Common myeloid progenitor, CD34-positive (primary cell): ENCODE measurements at regions of chr21 and their contacts with region 1.

Region 1: GRCh38 chr21:39388038-39388810 is 39.3 kb upstream of the HMGN1 start:
- DNase-seq: peak; percentile 82 to 85 (median 82)
- H3K4me3 ChIP-seq: peak overlapping the region in 6 of 7 experiments; percentile 49 to 82 (median 67)
- H3K27ac ChIP-seq: peak overlapping the region in 1 of 2 experiments; percentile 79
- H3K4me1 ChIP-seq: peaks cover 3 to 37% (median 30%) of the 10 kb centered on the region in 4 experiments
- H3K27me3 ChIP-seq: no peaks in the 10 kb centered on the region

Region 2: DNA sequence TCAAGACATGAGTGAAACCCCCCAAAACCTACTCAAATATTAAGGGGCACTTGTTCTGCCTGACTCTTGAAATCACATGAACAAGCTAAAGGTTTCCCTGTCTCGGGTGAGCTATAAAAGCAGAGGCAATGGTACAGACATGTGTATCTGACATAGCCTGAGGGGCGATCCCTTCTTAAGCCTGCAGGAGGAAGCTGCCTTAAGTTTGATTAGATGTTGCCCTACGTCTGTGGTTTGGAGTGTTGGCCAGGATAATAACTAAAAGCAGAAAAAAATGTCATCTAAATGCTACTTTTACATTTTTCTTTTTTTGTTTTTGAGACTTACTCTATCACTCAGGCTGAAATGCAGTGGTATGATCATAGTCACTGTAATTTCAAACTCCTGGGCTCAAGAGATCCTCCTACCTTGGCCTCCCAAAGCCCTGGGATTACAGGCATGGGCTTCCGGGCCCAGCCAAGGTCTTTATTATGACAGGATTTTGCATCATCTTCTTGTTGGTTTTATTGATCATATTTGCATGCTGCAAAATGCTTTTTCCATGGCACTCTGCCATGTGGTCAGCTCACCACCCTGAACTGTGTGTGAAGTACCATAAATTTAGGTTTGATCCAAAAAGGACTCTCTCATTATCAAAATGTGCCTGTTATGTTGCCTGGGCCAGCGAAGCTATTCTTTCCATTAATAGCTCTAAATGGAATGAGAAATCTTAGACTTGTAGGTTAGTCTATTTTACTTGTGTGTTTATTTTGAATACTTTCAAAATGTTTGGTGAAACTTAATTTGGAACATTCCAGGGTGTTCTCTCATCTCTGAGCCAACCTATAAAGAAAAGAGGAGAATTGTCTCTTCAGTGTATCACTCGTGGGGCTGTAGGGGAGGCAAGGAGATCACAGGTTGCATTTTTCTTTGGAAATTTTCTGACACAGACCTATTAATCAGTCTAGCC is 24.3 kb before region 1 on chr21:
- CTCF ChIA-PET with region 1: interaction called, 11 read pairs
- POLR2A ChIA-PET with region 1: interaction called, 3 read pairs
- DNase-seq: peak; percentile 80 to 92 (median 85)
- H3K4me3 ChIP-seq: peak overlapping the region in 1 of 7 experiments; percentile 23
- H3K27ac ChIP-seq: peak overlapping the region in 1 of 2 experiments; percentile 52
- H3K4me1 ChIP-seq: peaks cover 10 to 26% (median 19%) of the 10 kb centered on the region in 4 experiments
- H3K27me3 ChIP-seq: no peaks in the 10 kb centered on the region

Region 3: GRCh38 chr21:39373644-39374043 is 14.6 kb before region 1 on chr21:
- CTCF ChIA-PET with region 1: interaction called, 52 read pairs
- POLR2A ChIA-PET with region 1: interaction called, 3 read pairs
- DNase-seq: peak; percentile 50 to 82 (median 79)
- H3K4me3 ChIP-seq: no peak overlapping the region
- H3K27ac ChIP-seq: no peak overlapping the region
- H3K4me1 ChIP-seq: peaks cover 3 to 32% (median 13%) of the 10 kb centered on the region in 4 experiments
- H3K27me3 ChIP-seq: no peaks in the 10 kb centered on the region